ENCODE measurements at regions of chr19 and their contacts with region 1.

Region 1: GRCh38 chr19:14136509-14137281 is at the start of gene ASF1B:
- DNase-seq: peak; percentile 99
- H3K4me3 ChIP-seq: peak within 1 kb of the TSS; percentile 59 to 71
- H3K27ac ChIP-seq: peak within 1 kb of the TSS; percentile 92 to 93
- H3K4me1 ChIP-seq: peaks cover 0 to 6% of the 10 kb centered on the region in 2 donors
- H3K27me3 ChIP-seq: no peaks in the 10 kb centered on the region
- CTCF ChIP-seq: peak; percentile 89 to 99 (median 97)
- POLR2A ChIP-seq: peak; percentile 60 to 80
- total RNA-seq, gene ASF1B: 16.7 TPM in 1 of 4 donors, not detected in the others

Region 2: DNA sequence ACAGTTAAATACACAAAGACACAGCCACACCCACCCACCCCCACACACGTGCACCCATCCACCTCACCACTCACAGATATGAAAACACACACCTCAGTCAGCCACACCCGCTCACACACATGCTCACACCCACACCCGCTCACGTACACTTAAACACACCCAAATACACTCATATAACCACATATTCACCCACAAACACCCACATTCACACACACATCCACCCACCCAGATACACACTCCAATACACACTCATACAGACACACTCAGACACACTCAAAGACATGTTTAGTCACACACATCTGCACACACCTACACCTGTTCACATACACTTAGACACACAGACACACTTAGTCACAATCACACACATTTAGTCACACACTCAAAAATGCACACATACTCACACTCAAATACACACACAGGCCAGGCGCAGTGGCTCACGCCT is 38.7 kb after region 1 on chr19:
- intact Hi-C with region 1: no loop called
- DNase-seq: no peak
- H3K4me3 ChIP-seq: no peak overlapping the region
- H3K27ac ChIP-seq: no peak overlapping the region
- H3K4me1 ChIP-seq: no peaks in the 10 kb centered on the region
- H3K27me3 ChIP-seq: no peaks in the 10 kb centered on the region
- CTCF ChIP-seq: no peak
- POLR2A ChIP-seq: no peak

Region 3: DNA sequence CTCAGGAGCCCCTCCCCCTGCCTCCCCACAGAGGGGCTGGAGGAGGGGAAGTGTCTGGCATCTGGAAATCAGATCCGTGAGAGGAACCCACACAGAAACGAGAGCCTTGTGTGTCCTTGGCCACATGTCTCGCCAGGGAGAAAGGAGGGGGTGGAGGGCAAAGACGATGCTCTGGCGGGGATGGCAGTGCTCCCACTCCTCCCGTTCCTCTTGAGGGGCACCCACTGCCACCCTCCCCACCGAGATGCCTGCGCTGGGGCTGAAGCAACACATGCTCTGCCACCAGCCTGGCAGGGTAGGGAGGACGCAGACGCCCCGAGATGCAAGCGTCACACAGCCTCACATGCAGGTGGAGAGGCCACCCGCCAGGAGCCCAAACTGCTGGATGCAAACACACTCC is 66.5 kb after region 1 on chr19:
- intact Hi-C with region 1: no loop called
- DNase-seq: no peak
- H3K4me3 ChIP-seq: no peak overlapping the region
- H3K27ac ChIP-seq: no peak overlapping the region
- H3K4me1 ChIP-seq: no peaks in the 10 kb centered on the region
- H3K27me3 ChIP-seq: peaks cover 0 to 5% of the 10 kb centered on the region in 2 donors
- CTCF ChIP-seq: no peak
- POLR2A ChIP-seq: no peak

Region 4: GRCh38 chr19:14347999-14348889 is 211.5 kb after region 1 on chr19:
- intact Hi-C with region 1: loop called (anchors 5 kb)
- DNase-seq: peak; percentile 58 to 71
- H3K4me3 ChIP-seq: peak overlapping the region; percentile 20 to 24
- H3K27ac ChIP-seq: peak overlapping the region in 1 of 2 donors; percentile 43
- H3K4me1 ChIP-seq: peaks cover 0 to 7% of the 10 kb centered on the region in 2 donors
- H3K27me3 ChIP-seq: no peaks in the 10 kb centered on the region
- CTCF ChIP-seq: peak; percentile 95 to 99 (median 98)
- POLR2A ChIP-seq: no peak